PC-3 (cell line): ENCODE measurements at regions of chr4 and their contacts with region 1.

Region 1: GRCh38 chr4:102687373-102687981 is 73.3 kb downstream of the MANBA start:
- DNase-seq: peak; percentile 76
- ATAC-seq: peak; percentile 94
- H3K4me3 ChIP-seq: no peak overlapping the region; the same call in 1 of the 2 replicates
- H3K27ac ChIP-seq: peak overlapping the region; percentile 81
- H3K4me1 ChIP-seq: peaks cover 31% of the 10 kb centered on the region
- H3K27me3 ChIP-seq: no peaks in the 10 kb centered on the region
- CTCF ChIP-seq: no peak

Region 2: GRCh38 chr4:102674881-102675540 is 12.5 kb before region 1 on chr4:
- CTCF ChIA-PET with region 1: no interaction called
- POLR2A ChIA-PET with region 1: no interaction called
- intact Hi-C with region 1: no loop called
- DNase-seq: no peak
- ATAC-seq: no peak
- H3K4me3 ChIP-seq: no peak overlapping the region
- H3K27ac ChIP-seq: no peak overlapping the region
- H3K4me1 ChIP-seq: peaks cover 11% of the 10 kb centered on the region
- H3K27me3 ChIP-seq: no peaks in the 10 kb centered on the region
- CTCF ChIP-seq: no peak

Region 3: GRCh38 chr4:102734591-102735385 is 47.3 kb after region 1 on chr4:
- CTCF ChIA-PET with region 1: no interaction called
- POLR2A ChIA-PET with region 1: no interaction called
- intact Hi-C with region 1: loop called (anchors 10 kb)
- DNase-seq: peak; percentile 52
- ATAC-seq: peak; percentile 48
- H3K4me3 ChIP-seq: no peak overlapping the region
- H3K27ac ChIP-seq: peak overlapping the region; percentile 82
- H3K4me1 ChIP-seq: peaks cover 38% of the 10 kb centered on the region
- H3K27me3 ChIP-seq: no peaks in the 10 kb centered on the region
- CTCF ChIP-seq: no peak